ENCODE measurements at regions of chr16 and their contacts with region 1.

Region 1: DNA sequence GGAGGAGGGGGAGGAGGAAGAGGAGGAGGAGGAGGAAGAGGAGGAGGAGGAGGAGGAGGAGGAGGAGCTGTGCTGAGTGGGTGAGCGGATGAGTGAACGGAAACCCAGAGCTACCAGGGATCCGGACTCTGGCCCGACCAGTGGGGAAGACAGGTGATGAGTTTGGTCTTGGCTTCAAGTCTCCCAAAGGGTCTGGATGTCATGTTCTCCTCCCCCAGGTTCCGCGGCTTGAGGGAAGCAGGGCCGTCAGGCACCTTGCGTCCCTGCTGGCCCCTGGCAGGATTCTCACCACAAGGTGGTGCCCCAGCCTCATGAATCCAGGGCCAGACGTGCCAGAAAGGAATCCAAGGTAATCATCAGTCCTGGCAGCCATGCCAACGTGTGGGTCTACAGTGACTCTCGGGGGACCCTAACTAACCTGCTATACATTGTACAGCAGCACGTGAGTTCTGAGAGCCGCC is 13.5 kb upstream of the ABAT start:
- DNase-seq: peak; percentile 93
- H3K4me3 Mint-ChIP-seq: no peak overlapping the region
- H3K27ac Mint-ChIP-seq: no peak overlapping the region
- H3K4me1 Mint-ChIP-seq: no peaks in the 10 kb centered on the region
- H3K27me3 Mint-ChIP-seq: peaks cover 9% of the 10 kb centered on the region
- CTCF ChIP-seq: peak; percentile 90

Region 2: DNA sequence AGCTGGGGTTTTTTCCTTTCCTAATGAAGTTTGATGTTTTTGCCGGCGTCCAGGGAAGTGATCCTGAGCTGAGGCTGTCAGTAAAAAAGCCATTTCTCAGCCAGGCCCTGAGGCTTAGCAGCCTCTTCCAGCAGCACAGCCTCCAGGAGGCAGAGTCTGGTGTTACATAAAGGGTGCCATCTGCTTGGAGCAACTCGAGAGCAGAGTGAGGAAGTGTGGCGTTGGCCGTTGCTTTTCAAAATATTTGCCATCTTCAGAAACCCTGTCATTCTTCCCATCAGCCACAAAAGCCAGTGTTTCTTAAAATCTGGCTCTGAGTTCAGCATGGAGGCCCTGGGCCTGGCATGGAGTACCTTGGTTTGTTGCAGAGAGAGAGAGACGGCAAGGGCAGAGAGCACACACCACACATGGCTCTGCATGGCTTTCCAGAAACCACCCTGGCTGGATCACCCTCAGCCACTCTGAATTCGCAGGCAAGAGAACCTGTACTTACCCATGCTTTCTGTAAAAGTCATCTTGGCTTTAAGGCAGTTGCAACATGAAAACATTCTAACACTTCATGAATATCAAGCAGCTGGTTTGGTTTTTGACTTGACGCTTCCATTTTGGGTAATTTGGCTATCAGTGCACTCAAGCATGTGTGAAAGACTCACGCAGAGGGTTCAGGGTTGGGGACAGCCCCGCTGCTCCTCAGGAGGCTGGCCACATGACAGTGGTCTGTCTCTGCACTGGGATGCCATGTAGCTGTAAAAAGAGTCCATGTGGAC is 157.8 kb after region 1 on chr16:
- CTCF ChIA-PET with region 1: no interaction called
- intact Hi-C with region 1: no loop called
- DNase-seq: no peak
- H3K4me3 Mint-ChIP-seq: no peak overlapping the region
- H3K27ac Mint-ChIP-seq: no peak overlapping the region
- H3K4me1 Mint-ChIP-seq: no peaks in the 10 kb centered on the region
- H3K27me3 Mint-ChIP-seq: no peaks in the 10 kb centered on the region
- CTCF ChIP-seq: no peak

Region 3: DNA sequence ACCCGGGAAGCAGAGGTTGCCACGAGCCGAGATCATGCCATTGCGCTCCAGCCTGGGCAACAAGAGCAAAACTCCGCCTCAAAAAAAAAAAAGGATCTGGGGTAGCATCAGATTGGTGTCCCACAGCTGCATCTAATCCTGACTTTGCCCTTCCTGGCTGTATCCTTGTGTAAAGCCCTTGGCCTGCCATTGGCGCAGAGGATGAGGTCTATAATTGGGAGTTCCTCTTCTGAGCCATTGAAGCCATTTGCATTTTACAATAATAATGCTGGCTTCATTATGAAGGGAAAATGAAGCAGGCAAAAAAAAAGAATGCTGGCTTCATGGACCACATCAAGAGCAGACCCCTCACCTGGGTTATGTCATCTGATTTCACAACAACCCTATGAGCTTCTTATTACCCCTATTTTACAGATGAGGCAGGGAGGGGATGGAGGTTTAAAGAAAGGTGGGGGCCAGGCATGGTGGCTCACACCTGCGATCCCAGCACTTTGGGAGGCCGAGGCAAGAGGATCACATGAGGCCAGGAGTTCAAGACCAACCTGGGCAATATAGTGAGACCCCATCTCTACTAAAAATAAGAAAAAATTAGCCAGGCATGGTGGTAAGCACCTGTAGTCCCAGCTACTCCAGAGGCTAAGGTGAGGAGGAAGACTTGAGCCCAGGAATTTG is 220.1 kb after region 1 on chr16:
- CTCF ChIA-PET with region 1: no interaction called
- intact Hi-C with region 1: loop called (anchors 1 kb)
- DNase-seq: no peak
- H3K4me3 Mint-ChIP-seq: no peak overlapping the region
- H3K27ac Mint-ChIP-seq: no peak overlapping the region
- H3K4me1 Mint-ChIP-seq: peaks cover 29% of the 10 kb centered on the region
- H3K27me3 Mint-ChIP-seq: no peaks in the 10 kb centered on the region
- CTCF ChIP-seq: no peak

Region 4: DNA sequence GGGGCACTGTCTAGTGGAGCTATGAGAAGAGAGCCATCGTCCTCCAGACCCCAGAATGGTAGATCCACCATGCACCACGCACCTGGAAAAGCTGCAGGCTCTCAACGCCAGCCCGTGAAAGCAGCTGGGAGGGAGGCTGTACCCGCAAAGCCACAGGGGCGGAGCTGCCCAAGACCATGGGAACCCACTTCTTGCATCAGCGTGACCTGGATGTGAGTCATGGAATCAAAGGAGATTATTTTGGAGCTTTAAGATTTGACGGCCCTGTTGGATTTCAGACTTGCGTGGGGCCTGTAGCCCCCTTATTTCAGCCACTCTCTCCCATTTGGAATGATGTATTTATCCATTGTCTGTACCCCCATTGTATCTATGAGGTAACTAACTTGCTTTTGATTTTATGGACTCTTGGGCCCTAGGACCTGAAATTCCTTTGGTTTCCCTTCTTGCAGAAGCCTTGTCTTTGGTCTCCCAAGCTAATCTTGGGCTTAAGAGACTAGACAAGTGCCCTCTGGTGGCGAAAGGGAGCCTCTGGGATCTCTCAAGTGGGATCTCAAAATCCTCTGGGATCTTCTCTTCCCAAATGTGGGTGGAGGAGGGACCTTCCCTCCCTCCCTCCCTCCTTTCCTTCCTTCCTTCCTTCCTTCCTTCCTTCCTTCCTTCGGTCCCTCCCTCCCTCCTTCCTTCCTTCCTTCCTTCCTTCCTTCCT is 372.4 kb after region 1 on chr16:
- CTCF ChIA-PET with region 1: no interaction called
- intact Hi-C with region 1: loop called (anchors 2 kb)
- DNase-seq: peak; percentile 54
- H3K4me3 Mint-ChIP-seq: no peak overlapping the region
- H3K27ac Mint-ChIP-seq: no peak overlapping the region
- H3K4me1 Mint-ChIP-seq: no peaks in the 10 kb centered on the region
- H3K27me3 Mint-ChIP-seq: no peaks in the 10 kb centered on the region
- CTCF ChIP-seq: peak; percentile 52

Measured in Calu3 (cell line).